Activated CD4-positive, alpha-beta T cell treated with anti-CD3 and anti-CD28 coated beads, Interleukin-2, amount 10 ng/mL, durations not matched to agents 24 days and 14 days (primary cell): ENCODE measurements at regions of chr3 and their contacts with region 1.

Region 1: GRCh38 chr3:15629860-15630597 is 28.5 kb downstream of the BTD start:
- DNase-seq: peak; percentile 92
- H3K4me3 Mint-ChIP-seq: peak overlapping the region; percentile 53
- H3K27ac Mint-ChIP-seq: peak overlapping the region; percentile 67
- H3K4me1 Mint-ChIP-seq: peaks cover 28% of the 10 kb centered on the region
- H3K27me3 Mint-ChIP-seq: no peaks in the 10 kb centered on the region

Region 2: DNA sequence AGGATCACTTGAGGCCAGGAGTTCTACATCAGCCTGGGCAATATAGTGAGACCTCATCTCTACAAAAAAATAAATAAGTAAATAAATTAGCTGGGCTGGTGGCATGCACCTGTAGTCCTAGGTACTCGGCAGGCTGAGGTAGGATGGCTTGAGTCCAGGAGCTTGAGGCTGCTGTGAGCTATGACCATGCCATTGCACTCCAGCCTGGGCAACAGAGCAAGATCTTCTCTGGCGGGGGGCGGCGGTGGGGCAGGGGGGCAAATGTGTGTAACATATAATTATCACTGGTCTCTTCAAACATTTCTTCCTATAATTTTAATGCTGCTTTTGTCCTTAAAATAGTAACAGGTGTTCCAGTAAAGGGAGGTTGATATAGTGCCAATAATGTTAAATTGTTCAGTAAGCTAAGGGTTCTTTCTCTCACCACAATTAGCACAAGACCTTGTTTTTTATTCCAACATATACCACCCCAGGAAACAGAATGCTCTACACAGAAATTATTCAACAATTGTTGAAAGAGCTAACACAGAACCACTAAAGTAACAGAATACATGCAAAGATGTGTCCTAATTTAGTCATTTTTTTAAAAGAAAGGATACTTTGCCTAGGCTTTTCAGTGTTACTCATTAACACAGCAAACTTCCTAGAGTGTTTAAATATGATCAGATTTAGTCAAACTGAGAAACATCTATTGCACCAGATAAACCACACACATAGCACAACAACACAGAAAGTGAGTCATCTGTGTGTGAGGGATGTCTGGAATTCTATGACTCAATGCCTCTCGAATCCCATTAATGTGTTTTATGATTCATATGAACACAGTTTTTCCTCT is 138.6 kb after region 1 on chr3:
- intact Hi-C with region 1: loop called (anchors 1 kb)
- DNase-seq: no peak
- H3K4me3 Mint-ChIP-seq: peak overlapping the region; percentile 24
- H3K27ac Mint-ChIP-seq: peak overlapping the region; percentile 66
- H3K4me1 Mint-ChIP-seq: peaks cover 27% of the 10 kb centered on the region
- H3K27me3 Mint-ChIP-seq: no peaks in the 10 kb centered on the region

Region 3: DNA sequence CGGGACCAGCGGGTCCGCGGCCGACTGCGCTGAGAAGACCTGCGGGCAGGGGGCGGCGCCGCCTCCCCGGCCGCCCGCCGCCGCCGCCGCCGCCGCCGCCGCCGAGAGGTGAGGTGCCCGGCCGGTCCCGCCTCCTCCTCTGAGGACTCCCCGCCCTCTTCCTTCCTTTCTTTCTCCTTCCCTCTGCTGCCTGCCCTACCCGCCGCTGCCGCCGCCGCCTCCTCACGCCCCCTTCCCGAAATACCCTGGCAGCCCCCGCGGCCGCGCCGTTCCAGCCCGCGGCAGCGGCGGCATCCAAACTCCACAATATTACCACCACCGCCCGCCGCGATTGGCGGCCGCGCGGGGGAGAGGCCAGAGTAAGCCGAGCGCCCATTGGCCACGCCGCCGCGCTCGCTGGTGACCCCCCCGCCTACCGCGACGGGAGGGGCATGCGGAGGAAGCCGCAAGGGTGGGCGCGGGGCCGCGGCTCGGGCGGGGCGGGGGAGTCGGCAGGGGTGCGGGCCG is 229.5 kb after region 1 on chr3:
- intact Hi-C with region 1: loop called (anchors 2 kb)
- DNase-seq: peak; percentile 94
- H3K4me3 Mint-ChIP-seq: peak overlapping the region; percentile 92
- H3K27ac Mint-ChIP-seq: peak overlapping the region; percentile 96
- H3K4me1 Mint-ChIP-seq: peaks cover 25% of the 10 kb centered on the region
- H3K27me3 Mint-ChIP-seq: peaks cover 9% of the 10 kb centered on the region

Region 4: DNA sequence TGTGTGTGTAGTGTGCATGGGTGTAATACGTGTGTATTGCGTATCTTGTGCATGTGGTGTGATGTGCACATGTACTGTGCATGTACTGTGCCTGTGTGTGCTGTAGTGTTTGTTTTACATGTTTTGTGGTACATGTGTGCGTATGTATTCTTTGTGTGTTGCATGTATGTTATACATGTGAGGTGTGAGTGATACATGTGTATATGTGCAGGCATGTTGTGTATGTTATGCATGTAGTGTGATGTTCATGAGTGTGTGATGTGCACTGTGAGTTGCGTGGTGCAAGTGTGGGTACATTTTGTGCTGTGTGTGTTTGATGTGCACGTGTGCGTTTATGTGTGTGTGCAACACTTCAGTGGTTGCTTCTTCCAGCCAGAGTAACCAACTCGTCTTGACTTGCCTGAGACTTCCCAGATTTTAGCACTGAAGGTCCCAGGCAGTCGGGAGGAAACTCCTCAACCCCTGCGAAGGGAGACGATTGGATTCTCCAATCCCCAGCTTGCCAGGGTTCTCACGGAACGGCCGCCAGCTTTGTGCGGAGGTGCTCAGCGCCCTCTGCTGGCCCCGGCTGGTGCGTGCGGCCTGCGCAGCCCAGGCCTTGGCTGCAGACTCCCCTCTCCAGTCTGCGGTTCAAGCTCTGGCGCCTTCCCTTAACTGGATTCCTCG is 548.1 kb after region 1 on chr3:
- intact Hi-C with region 1: loop called (anchors 2 kb)
- DNase-seq: peak; percentile 90
- H3K4me3 Mint-ChIP-seq: no peak overlapping the region
- H3K27ac Mint-ChIP-seq: no peak overlapping the region
- H3K4me1 Mint-ChIP-seq: peaks cover 3% of the 10 kb centered on the region
- H3K27me3 Mint-ChIP-seq: peaks cover 26% of the 10 kb centered on the region

Region 5: GRCh38 chr3:16399473-16399872 is 769.4 kb after region 1 on chr3:
- intact Hi-C with region 1: no loop called
- DNase-seq: no peak
- H3K4me3 Mint-ChIP-seq: no peak overlapping the region
- H3K27ac Mint-ChIP-seq: peak overlapping the region; percentile 74
- H3K4me1 Mint-ChIP-seq: peaks cover 34% of the 10 kb centered on the region
- H3K27me3 Mint-ChIP-seq: no peaks in the 10 kb centered on the region